ENCODE measurements at regions of chr12 and their contacts with region 1.

Region 1: DNA sequence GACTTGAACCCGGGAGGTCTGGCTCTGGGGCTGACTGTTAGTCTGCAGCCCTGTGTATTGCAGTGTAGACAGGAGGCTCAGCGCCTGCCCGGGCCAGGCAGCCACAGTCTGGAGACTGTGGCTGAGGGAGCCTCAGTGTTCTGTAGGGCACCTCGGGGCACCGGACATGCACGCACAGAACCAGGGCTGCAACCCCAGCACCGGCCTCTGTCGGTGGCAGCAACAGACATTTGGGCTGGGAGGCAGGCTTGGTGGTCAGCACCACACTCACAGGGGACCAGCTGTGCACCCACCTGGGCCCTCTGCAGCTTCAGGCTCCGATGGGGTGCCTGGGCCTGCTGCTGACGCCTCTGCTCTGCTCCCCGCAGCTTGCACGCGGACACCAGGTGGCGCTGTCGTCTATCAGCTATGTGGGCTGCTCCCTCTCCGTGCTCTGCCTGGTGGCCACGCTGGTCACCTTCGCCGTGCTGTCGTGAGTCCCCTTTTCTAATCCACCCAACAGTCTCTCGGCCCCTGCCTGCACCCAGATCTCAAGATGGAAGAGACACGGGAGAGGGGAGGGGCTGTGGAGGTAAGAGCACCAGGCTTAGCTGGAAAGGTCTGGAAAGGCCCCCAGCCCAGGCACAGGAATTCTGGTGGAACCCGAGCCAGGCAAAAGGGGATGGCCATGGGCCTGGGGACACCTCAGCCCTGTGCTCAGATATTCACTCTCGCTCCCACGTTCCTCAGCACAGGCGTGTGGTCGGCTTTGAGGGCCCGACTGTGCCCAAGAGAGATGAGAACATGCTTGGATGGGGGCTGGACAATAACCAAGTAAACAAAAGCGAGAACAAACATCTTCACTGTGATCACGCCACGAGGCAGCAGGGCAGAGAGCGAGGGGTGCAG is 151.0 kb downstream of the ADGRD1 start:
- DNase-seq: no peak
- ATAC-seq: peak; percentile 88
- H3K4me3 ChIP-seq: no peak overlapping the region
- H3K27ac ChIP-seq: no peak overlapping the region
- H3K4me1 ChIP-seq: peaks cover 46% of the 10 kb centered on the region
- H3K27me3 ChIP-seq: no peaks in the 10 kb centered on the region
- CTCF ChIP-seq: peak; percentile 92 to 96 (median 95)
- EP300 ChIP-seq: no peak
- POLR2A ChIP-seq: no peak
- RAD21 ChIP-seq: peak; percentile 84

Region 2: GRCh38 chr12:131068048-131068892 is 36.4 kb before region 1 on chr12:
- CTCF ChIA-PET with region 1: interaction called, 13 read pairs
- POLR2A ChIA-PET with region 1: no interaction called
- RAD21 ChIA-PET with region 1: no interaction called
- SMC1A ChIA-PET with region 1: no interaction called
- in situ Hi-C with region 1: no loop called
- intact Hi-C with region 1: no loop called
- DNase-seq: no peak
- ATAC-seq: no peak
- H3K4me3 ChIP-seq: no peak overlapping the region
- H3K27ac ChIP-seq: no peak overlapping the region
- H3K4me1 ChIP-seq: no peaks in the 10 kb centered on the region; the same call in 1 of the 2 replicates
- H3K27me3 ChIP-seq: no peaks in the 10 kb centered on the region
- CTCF ChIP-seq: no peak
- EP300 ChIP-seq: no peak
- POLR2A ChIP-seq: no peak
- RAD21 ChIP-seq: no peak

Region 3: DNA sequence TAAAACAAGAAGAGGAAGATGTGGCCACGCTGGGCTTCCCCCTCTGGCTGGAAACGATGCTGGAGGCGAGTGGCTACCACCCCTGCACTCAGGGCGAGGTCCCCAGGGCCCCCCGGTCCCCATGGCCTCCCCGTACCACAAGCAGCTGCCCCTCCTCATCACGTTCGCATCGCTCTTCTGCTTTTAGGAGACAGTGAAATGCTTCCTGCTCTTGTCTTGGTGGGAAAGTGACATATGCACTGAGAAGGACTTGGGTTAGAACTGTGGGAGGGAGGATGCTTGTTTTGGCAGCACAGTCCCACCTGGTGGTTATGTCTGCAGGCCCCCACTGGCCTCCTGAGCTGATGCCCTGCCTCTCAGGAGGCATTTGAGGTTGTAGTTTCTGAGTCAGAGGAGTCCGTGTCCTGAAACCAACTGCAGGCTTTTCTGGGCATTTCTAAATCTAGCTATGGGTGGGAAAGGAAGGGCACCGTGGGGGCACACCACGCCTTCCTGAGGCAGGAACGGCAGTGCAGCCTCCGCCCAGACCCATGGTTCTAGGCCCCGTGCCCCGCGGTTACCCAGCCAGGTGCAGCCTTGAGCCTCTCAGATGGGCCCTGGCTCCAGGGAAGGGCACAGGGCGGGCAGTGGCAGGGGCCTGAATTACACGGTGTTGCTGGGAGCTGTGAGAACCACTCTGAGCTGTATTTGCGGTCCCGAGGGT is 11.7 kb before region 1 on chr12:
- CTCF ChIA-PET with region 1: interaction called, 37 read pairs
- POLR2A ChIA-PET with region 1: interaction called, 9 read pairs
- RAD21 ChIA-PET with region 1: interaction called, 36 read pairs
- SMC1A ChIA-PET with region 1: interaction called, 65 read pairs
- in situ Hi-C with region 1: no loop called
- intact Hi-C with region 1: no loop called
- DNase-seq: peak; percentile 98
- ATAC-seq: peak; percentile 78
- H3K4me3 ChIP-seq: 0 out of 2 replicates have a peak overlapping the region, but pooled peaks have one; percentile 28
- H3K27ac ChIP-seq: peak overlapping the region; percentile 89
- H3K4me1 ChIP-seq: peaks cover 46% of the 10 kb centered on the region
- H3K27me3 ChIP-seq: no peaks in the 10 kb centered on the region
- CTCF ChIP-seq: peak; percentile 24 to 36 (median 27); a peak in 4 of 6 replicates
- EP300 ChIP-seq: peak; percentile 44 to 74; a peak in 2 of 4 replicates
- POLR2A ChIP-seq: no peak
- RAD21 ChIP-seq: peak; percentile 34; the same call in 1 of the 2 replicates

Region 4: GRCh38 chr12:131121705-131122405 is 17.1 kb after region 1 on chr12:
- CTCF ChIA-PET with region 1: interaction called, 80 read pairs
- POLR2A ChIA-PET with region 1: no interaction called
- RAD21 ChIA-PET with region 1: interaction called, 10 read pairs
- SMC1A ChIA-PET with region 1: interaction called, 37 read pairs
- in situ Hi-C with region 1: no loop called
- intact Hi-C with region 1: no loop called
- DNase-seq: no peak
- ATAC-seq: no peak
- H3K4me3 ChIP-seq: no peak overlapping the region
- H3K27ac ChIP-seq: no peak overlapping the region
- H3K4me1 ChIP-seq: no peaks in the 10 kb centered on the region
- H3K27me3 ChIP-seq: no peaks in the 10 kb centered on the region
- CTCF ChIP-seq: no peak
- EP300 ChIP-seq: no peak
- POLR2A ChIP-seq: no peak
- RAD21 ChIP-seq: no peak

Region 5: DNA sequence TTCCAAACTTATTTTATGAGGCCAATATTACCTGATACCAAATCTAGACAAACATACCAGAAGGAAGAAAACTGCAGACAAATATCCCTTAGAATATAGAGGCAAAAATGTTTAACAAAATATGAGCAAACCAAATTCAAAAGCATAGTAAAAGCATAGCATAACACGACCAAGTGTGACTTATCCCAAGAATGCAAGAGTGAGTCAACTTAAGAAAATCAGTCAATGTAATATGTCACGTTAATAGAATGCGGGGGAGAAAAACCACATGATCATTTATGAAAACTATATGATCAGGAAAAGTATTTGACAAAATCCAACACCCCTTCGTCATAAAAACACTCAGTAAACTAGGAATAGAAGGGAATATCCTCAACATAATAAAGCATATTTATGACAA is 66.3 kb after region 1 on chr12:
- CTCF ChIA-PET with region 1: no interaction called
- POLR2A ChIA-PET with region 1: no interaction called
- RAD21 ChIA-PET with region 1: no interaction called
- SMC1A ChIA-PET with region 1: no interaction called
- in situ Hi-C with region 1: no loop called
- intact Hi-C with region 1: no loop called
- DNase-seq: no peak
- ATAC-seq: no peak
- H3K4me3 ChIP-seq: no peak overlapping the region
- H3K27ac ChIP-seq: no peak overlapping the region
- H3K4me1 ChIP-seq: no peaks in the 10 kb centered on the region
- H3K27me3 ChIP-seq: no peaks in the 10 kb centered on the region
- CTCF ChIP-seq: no peak
- EP300 ChIP-seq: no peak
- POLR2A ChIP-seq: no peak
- RAD21 ChIP-seq: no peak

Region 6: DNA sequence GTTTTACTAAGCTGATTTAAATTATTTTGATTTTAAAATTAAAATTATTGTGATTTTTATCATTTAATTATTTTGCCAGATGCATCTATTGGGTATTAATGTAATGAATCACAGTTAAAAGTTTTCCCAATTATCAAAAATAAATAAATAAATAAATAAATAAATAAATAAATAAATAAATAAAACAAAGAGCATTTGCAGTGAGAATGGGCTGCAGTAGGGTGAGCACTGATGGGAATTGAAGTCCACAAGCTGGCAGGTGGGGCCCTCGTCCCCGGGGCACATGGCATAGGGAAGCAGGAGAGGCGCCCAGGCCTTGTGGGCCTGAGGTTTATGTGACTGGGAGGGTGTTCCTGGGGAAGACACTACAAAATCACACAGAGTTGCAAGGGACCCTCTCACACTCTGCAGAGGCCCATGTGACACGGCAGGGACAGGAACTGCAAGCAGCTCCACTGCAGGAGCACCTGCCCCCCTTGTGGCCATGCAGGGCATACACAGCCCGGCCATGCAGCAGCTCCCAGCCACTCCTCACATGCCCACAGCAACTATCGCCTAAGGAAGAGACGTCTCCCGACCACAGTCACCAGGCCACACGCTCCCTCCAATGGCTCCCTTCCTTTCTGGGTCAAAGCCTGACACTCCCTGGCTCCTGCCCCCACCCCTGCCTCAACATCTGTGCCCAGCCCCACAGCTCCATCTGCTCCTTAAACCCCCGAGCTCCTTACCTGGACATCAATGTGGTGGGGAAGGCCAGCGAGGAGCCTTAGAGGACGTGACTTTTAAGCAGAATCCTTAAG is 349.9 kb after region 1 on chr12:
- CTCF ChIA-PET with region 1: interaction called, 41 read pairs
- POLR2A ChIA-PET with region 1: no interaction called
- RAD21 ChIA-PET with region 1: interaction called, 12 read pairs
- SMC1A ChIA-PET with region 1: interaction called, 8 read pairs
- in situ Hi-C with region 1: no loop called
- intact Hi-C with region 1: loop called (anchors 2 kb)
- DNase-seq: no peak
- ATAC-seq: peak; percentile 100
- H3K4me3 ChIP-seq: no peak overlapping the region
- H3K27ac ChIP-seq: no peak overlapping the region
- H3K4me1 ChIP-seq: no peaks in the 10 kb centered on the region
- H3K27me3 ChIP-seq: no peaks in the 10 kb centered on the region
- CTCF ChIP-seq: peak; percentile 44 to 79 (median 70)
- EP300 ChIP-seq: no peak
- POLR2A ChIP-seq: no peak
- RAD21 ChIP-seq: peak; percentile 61